HEK293 (cell line): ENCODE measurements at regions of chr6 and their contacts with region 1.

Region 1: DNA sequence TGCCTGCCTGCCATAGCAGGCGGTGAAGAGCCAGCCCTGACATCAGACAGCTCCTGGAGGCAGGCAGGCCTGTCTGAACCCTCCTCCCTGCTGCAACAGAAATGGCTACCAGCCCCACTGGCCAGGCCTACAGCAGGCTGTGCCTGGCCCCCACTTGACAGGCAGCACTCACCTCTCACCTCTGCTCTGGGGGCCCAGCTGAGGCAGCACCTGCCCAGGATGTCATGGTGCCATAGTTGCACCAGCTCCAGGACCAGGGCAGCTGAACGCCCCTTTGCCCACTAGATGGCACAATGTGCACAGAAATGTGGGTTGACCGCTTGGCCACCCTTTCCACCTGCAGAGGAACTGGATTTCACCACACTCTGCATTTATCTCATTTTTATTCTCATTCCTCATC is 30.6 kb downstream of the MRPL14 start:
- H3K4me3 ChIP-seq: no peak overlapping the region
- H3K27ac ChIP-seq: no peak overlapping the region
- H3K4me1 ChIP-seq: no peaks in the 10 kb centered on the region
- CTCF ChIP-seq: peak; percentile 88

Region 2: DNA sequence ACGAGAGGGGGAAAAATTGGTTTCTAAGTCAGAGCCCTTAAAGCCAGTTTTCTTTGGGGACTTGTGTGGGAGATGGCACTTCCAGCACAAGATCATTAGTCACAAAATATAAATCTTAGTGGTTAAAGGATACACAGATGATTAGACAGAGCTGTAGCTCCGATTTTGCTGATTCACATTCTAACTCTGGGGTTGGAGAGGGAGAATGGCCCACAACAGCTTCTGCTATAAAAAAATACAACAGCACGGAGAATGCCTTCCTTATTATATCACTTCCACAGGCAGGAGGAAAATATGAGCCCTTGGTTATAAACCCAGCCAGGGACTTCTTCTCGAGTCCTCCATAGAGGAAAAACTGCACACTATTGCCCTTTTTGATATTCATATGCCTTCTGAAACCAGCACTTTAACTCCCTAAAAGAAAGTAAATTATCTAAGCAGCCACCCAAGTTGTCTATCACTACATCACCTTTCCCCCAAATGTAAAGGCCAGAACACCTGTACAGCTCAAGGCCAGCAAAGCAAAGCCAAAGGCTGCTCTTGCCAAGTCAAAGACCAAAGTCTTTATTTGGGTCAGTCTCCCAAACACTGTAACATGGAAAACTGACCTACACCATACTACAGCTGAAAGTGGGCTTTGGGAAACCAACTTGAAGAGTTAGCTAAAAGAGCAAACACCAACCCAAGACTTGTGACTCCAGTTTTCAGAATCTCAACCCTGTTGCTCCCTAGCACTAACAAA is 20.2 kb after region 1 on chr6:
- CTCF ChIA-PET with region 1: interaction called, 54 read pairs
- POLR2A ChIA-PET with region 1: interaction called, 7 read pairs
- H3K4me3 ChIP-seq: no peak overlapping the region
- H3K27ac ChIP-seq: no peak overlapping the region
- H3K4me1 ChIP-seq: peaks cover 9% of the 10 kb centered on the region
- CTCF ChIP-seq: no peak

Region 3: DNA sequence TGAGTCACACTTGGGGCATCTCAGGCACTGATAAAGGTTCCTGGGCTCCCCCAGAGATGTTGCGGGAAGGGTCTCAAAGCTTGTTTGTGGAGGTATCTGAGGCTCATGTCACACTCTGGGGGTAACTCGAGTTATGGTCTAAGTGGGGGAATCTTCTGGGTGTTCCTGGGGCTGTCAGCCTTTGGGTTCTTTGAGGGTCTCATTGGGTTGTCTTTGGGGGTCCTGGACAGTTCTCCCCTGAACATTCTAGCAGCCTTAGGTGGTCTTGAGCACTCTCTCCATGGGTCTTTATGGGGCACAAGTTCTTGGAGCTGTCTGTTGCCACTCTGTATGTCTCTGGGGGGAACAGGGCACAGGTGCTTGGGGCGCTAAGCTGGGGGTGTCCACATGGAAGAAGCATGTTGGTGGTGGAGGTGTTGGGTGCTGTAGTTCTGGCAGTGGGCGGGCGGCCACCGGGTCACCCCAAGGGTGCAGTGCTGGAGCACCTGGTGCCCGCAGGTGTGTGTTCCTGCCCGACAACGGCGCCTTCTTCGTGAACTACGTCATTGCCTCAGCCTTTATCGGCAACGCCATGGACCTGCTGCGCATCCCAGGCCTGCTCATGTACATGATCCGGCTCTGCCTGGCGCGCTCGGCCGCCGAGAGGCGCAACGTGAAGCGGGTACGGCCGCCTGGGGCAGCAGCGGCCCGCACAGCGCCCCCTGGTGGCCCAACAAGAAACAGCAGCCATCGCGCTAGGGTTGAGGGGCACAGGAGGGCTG is 54.9 kb after region 1 on chr6:
- CTCF ChIA-PET with region 1: interaction called, 35 read pairs
- POLR2A ChIA-PET with region 1: no interaction called
- H3K4me3 ChIP-seq: no peak overlapping the region
- H3K27ac ChIP-seq: no peak overlapping the region
- H3K4me1 ChIP-seq: no peaks in the 10 kb centered on the region
- CTCF ChIP-seq: peak; percentile 99

Region 4: DNA sequence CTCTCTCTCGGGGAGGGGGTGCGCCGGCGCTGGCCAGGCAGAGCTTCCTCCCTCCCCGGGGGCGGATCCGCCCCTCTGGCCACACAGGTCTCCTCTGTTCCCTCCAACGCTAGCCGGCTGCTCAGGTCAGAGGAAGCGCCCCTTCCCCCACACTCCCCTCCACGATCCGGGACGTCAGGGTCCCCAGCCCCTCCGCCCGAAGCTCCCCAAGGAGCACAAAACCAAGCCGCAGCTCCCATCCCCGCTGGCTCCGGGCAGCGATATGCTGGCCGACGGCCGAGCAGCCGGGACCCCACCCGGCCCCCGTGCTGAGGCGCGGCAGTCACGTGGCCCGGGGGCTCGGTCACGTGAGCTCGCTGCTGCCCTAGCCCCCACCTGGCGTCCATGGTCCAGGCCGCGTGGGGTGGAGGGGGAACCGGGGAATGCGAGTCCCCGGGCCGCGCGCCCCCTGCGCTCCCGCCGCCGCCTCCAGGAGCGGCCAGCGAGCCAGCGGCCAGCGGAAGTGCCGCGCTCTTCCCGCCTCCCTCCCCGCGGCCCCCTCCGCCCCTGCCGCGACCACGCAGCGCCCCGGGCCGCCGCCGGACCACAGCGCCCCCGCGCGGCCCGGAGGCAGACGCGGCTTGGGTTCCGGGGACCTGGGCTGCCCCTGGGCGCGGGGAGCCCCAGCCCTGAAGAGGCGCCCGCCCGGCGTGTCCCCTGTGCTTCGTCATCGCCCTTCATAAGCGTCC is 160.6 kb after region 1 on chr6 and contains the start of gene SLC35B2:
- CTCF ChIA-PET with region 1: interaction called, 12 read pairs
- POLR2A ChIA-PET with region 1: interaction called, 4 read pairs
- H3K4me3 ChIP-seq: peak within 1 kb of the TSS; percentile 82
- H3K27ac ChIP-seq: peak within 1 kb of the TSS; percentile 65; the same call in 1 of the 2 replicates
- H3K4me1 ChIP-seq: no peaks in the 10 kb centered on the region
- CTCF ChIP-seq: 0 out of 2 replicates have a peak, but pooled peaks have one; percentile 32